ENCODE measurements at regions of chr3 and their contacts with region 1.

Region 1: GRCh38 chr3:78041486-78041885 is 1001.6 kb downstream of the ROBO2 start:
- DNase-seq: no peak
- H3K4me3 ChIP-seq: no peak overlapping the region
- H3K4me3 Mint-ChIP-seq: no peak overlapping the region
- H3K27ac ChIP-seq: no peak overlapping the region
- H3K27ac Mint-ChIP-seq: no peak overlapping the region
- H3K4me1 ChIP-seq: no peaks in the 10 kb centered on the region
- H3K4me1 Mint-ChIP-seq: no peaks in the 10 kb centered on the region
- H3K27me3 ChIP-seq: no peaks in the 10 kb centered on the region
- H3K27me3 Mint-ChIP-seq: no peaks in the 10 kb centered on the region
- CTCF ChIP-seq: no peak

Region 2: GRCh38 chr3:77939726-77940125 is 101.8 kb before region 1 on chr3:
- intact Hi-C with region 1: loop called in 1 of 2 experiments (anchors 5 kb)
- DNase-seq: no peak
- H3K4me3 ChIP-seq: no peak overlapping the region
- H3K4me3 Mint-ChIP-seq: no peak overlapping the region
- H3K27ac ChIP-seq: no peak overlapping the region
- H3K27ac Mint-ChIP-seq: no peak overlapping the region
- H3K4me1 ChIP-seq: no peaks in the 10 kb centered on the region
- H3K4me1 Mint-ChIP-seq: no peaks in the 10 kb centered on the region
- H3K27me3 ChIP-seq: no peaks in the 10 kb centered on the region
- H3K27me3 Mint-ChIP-seq: no peaks in the 10 kb centered on the region
- CTCF ChIP-seq: no peak

Measured in CD14-positive monocyte (primary cell).